ENCODE measurements at regions of chr11 and their contacts with region 1.

Region 1: DNA sequence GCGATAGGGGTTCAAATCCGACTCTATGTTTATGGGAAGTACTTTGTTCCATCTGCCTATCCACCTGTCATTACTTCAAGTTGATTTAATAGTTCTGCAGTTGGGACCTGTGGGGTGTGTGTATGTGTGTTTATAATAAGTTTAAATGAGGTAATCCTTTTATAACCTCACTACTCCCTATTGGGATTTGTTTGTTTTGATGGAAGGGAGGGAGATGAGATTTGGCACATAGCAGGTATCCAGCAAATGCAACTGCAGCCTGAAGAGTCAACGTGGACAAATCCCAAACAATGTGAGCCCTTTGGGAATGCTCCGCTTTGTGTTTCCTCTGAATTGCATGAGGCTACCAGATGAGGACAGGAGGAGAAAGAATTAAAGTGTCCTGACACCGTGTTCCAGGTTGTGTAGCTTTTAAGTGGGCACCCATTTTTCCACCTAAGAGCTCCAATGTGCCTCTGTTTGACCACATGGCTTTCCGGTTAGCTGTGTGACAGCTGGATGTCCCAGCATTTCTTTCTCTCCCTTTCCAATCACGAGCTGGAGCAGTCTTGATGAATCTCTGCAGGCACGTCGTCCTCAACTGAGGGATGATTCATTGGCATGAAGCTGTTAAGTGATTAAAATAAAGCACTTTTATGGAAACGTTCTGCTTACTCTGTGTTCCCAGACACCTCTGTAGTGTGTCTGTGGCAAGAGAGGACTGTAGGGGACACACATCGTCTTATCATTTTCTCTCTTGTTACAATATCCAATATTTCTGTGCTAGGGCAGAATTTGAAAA is 610.7 kb downstream of the NTM start:
- DNase-seq: no peak
- H3K4me3 ChIP-seq: no peak overlapping the region
- CTCF ChIP-seq: no peak
- POLR2A ChIP-seq: no peak

Region 2: GRCh38 chr11:131637469-131638175 is 343.5 kb before region 1 on chr11:
- intact Hi-C with region 1: no loop called
- DNase-seq: no peak
- H3K4me3 ChIP-seq: no peak overlapping the region
- CTCF ChIP-seq: no peak
- POLR2A ChIP-seq: no peak

Region 3: DNA sequence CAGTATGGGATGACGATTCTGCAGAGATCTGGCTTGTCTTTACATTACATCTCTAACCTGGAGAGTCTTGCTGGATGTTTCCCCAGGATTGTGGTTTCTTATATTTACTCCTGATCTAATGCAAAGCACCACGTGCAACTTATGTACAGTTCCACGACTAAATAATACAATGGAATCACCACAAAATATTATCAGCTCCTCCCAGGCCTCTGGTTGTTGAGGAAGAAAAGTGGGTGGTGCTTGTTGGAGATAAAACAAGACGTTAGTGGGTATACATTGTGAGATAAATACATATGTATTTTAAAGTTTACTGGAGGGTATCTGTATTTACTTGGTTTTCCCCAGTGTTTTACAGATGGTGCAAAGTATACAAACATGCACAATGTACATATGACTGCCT is 41.0 kb before region 1 on chr11:
- intact Hi-C with region 1: loop called (anchors 1 kb)
- DNase-seq: no peak
- H3K4me3 ChIP-seq: no peak overlapping the region
- CTCF ChIP-seq: no peak
- POLR2A ChIP-seq: no peak

Region 4: GRCh38 chr11:131955904-131956303 is 25.2 kb before region 1 on chr11:
- intact Hi-C with region 1: no loop called
- DNase-seq: no peak
- H3K4me3 ChIP-seq: no peak overlapping the region
- CTCF ChIP-seq: no peak
- POLR2A ChIP-seq: no peak

Region 5: GRCh38 chr11:132202621-132203020 is 221.5 kb after region 1 on chr11:
- intact Hi-C with region 1: no loop called
- DNase-seq: no peak
- H3K4me3 ChIP-seq: no peak overlapping the region
- CTCF ChIP-seq: no peak
- POLR2A ChIP-seq: no peak

Region 6: GRCh38 chr11:132330515-132330914 is 349.4 kb after region 1 on chr11:
- intact Hi-C with region 1: no loop called
- DNase-seq: no peak
- H3K4me3 ChIP-seq: no peak overlapping the region
- CTCF ChIP-seq: no peak
- POLR2A ChIP-seq: no peak

Measured in lower leg skin (tissue), 4 donors.